Left ventricle myocardium inferior (tissue), 1 donor: ENCODE measurements at regions of chr2 and their contacts with region 1.

Region 1: GRCh38 chr2:48107326-48107925 is 201.1 kb upstream of the FBXO11 start:
- DNase-seq: no peak
- H3K4me3 ChIP-seq: peak overlapping the region; percentile 46
- H3K27ac ChIP-seq: peak overlapping the region; percentile 66
- H3K4me1 ChIP-seq: peaks cover 35% of the 10 kb centered on the region
- H3K27me3 ChIP-seq: no peaks in the 10 kb centered on the region
- CTCF ChIP-seq: no peak

Region 2: GRCh38 chr2:47639467-47639866 is 468.0 kb before region 1 on chr2:
- intact Hi-C with region 1: no loop called
- DNase-seq: no peak
- H3K4me3 ChIP-seq: no peak overlapping the region
- H3K27ac ChIP-seq: no peak overlapping the region
- H3K4me1 ChIP-seq: peaks cover 4% of the 10 kb centered on the region
- H3K27me3 ChIP-seq: peaks cover 11% of the 10 kb centered on the region
- CTCF ChIP-seq: no peak

Region 3: GRCh38 chr2:47862949-47863348 is 244.5 kb before region 1 on chr2:
- intact Hi-C with region 1: loop called (anchors 5 kb)
- DNase-seq: no peak
- H3K4me3 ChIP-seq: no peak overlapping the region
- H3K27ac ChIP-seq: no peak overlapping the region
- H3K4me1 ChIP-seq: peaks cover 55% of the 10 kb centered on the region
- H3K27me3 ChIP-seq: no peaks in the 10 kb centered on the region
- CTCF ChIP-seq: no peak

Region 4: DNA sequence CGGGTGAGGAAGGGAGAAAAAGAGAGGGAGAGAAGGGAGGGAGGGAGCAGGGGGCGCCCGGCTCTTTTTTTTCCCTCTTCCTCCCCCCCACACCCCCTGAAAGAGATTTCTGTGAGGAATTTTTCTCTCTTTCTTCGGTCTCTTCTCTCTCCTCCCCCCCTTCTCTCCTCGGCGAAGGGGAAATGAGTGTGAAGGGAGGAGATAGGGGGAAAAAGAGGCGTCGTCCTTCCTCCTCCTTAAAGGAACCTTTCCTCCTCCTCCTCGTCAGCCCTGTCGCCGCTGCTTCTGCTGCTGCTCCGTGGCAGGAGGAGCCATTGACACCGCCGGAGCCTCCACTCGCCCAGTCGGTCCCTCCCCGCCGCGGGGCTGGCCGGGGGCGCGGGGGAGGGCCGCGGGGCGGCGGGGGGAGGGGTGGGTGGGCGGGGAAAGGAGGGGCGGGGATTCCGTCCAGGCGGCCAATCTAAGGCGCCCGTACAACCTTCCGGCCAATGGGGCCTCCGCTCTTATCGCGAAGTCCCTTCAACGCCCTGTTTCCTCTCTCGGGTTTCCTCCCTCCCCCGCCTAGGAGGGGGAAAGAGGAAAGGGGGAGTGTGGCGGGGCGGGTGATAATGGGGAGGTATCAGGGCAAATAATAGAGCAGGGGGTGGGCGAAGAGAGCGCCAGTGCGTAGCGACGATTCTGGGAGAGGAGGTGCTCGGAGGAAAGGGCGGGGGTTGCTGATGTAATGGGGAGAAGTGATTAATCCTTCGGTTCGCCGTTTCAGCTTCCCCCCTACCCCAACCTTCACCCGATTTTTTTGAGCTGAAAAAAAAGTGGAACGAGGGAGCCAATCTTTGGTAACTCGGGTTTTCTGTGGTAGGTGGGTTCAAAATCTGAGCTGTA is 201.0 kb before region 1 on chr2 and contains the start of gene FBXO11:
- intact Hi-C with region 1: loop called (anchors 2 kb)
- DNase-seq: peak; percentile 96
- H3K4me3 ChIP-seq: peak within 1 kb of the TSS; percentile 98
- H3K27ac ChIP-seq: peak within 1 kb of the TSS; percentile 99
- H3K4me1 ChIP-seq: peaks cover 56% of the 10 kb centered on the region
- H3K27me3 ChIP-seq: no peaks in the 10 kb centered on the region
- CTCF ChIP-seq: peak; percentile 71
- total RNA-seq, gene FBXO11: 34.7 TPM

Region 5: DNA sequence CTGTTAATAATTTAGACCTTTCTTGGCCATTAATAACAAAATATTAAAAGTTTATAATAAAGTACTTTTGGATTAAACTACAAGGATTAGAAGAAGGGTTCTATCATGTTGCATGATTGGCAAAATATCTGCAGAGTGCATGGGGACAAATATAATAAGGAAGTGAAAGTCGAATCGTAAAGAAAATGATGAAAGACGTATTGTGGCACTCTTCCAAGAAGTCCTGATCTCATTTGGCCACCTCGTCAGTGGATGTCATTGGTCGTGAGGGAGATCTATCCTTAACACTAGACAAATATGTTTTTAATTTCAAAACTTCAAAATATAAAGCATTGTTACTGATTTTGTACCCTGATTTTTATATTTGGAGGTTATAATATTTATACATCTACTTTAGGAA is 224.9 kb after region 1 on chr2:
- intact Hi-C with region 1: no loop called
- DNase-seq: no peak
- H3K4me3 ChIP-seq: peak overlapping the region; percentile 34
- H3K27ac ChIP-seq: no peak overlapping the region
- H3K4me1 ChIP-seq: peaks cover 28% of the 10 kb centered on the region
- H3K27me3 ChIP-seq: no peaks in the 10 kb centered on the region
- CTCF ChIP-seq: no peak